Aorta (tissue), 5 donors: ENCODE measurements at regions of chr15 and their contacts with region 1.

Region 1: GRCh38 chr15:40763801-40764732 is at the start of gene GCHFR:
- DNase-seq: peak; percentile 87 to 93
- ATAC-seq: peak; percentile 85
- H3K4me3 ChIP-seq: peak within 1 kb of the TSS; percentile 7 to 57
- H3K27ac ChIP-seq: peak within 1 kb of the TSS in 1 of 2 donors; percentile 74
- H3K4me1 ChIP-seq: no peaks in the 10 kb centered on the region
- H3K27me3 ChIP-seq: no peaks in the 10 kb centered on the region
- total RNA-seq, gene GCHFR: 4.5 to 7.7 TPM

Region 2: GRCh38 chr15:40807028-40807887 is 43.2 kb after region 1 on chr15 and contains the starts of genes DNAJC17 and ZFYVE19:
- intact Hi-C with region 1: loop called (anchors 5 kb)
- DNase-seq: peak; percentile 98 to 99
- ATAC-seq: peak; percentile 99
- H3K4me3 ChIP-seq: peak within 1 kb of the TSS; percentile 87 to 99
- H3K27ac ChIP-seq: peak within 1 kb of the TSS; percentile 81 to 84
- H3K4me1 ChIP-seq: no peaks in the 10 kb centered on the region
- H3K27me3 ChIP-seq: no peaks in the 10 kb centered on the region
- total RNA-seq, gene DNAJC17: 29.4 to 34.7 TPM
- total RNA-seq, gene ZFYVE19: 9.3 to 17.4 TPM

Region 3: GRCh38 chr15:40825661-40826088 is 61.6 kb after region 1 on chr15:
- intact Hi-C with region 1: no loop called
- DNase-seq: peak in 1 of 2 donors; percentile 16
- ATAC-seq: no peak
- H3K4me3 ChIP-seq: no peak overlapping the region
- H3K27ac ChIP-seq: no peak overlapping the region
- H3K4me1 ChIP-seq: no peaks in the 10 kb centered on the region
- H3K27me3 ChIP-seq: no peaks in the 10 kb centered on the region